ENCODE measurements at regions of chr17 and their contacts with region 1.

Region 1: GRCh38 chr17:49031965-49032928 is 35.1 kb downstream of the IGF2BP1 start:
- DNase-seq: peak; percentile 59
- H3K4me3 ChIP-seq: no peak overlapping the region
- H3K27ac ChIP-seq: no peak overlapping the region
- H3K4me1 ChIP-seq: peaks cover 11% of the 10 kb centered on the region
- H3K27me3 ChIP-seq: no peaks in the 10 kb centered on the region
- CTCF ChIP-seq: peak; percentile 87 to 90

Region 2: GRCh38 chr17:48678141-48678971 is 353.9 kb before region 1 on chr17:
- CTCF ChIA-PET with region 1: no interaction called
- dilution Hi-C with region 1: no loop called
- in situ Hi-C with region 1: no loop called
- intact Hi-C with region 1: loop called (anchors 1 kb)
- DNase-seq: peak; percentile 69
- H3K4me3 ChIP-seq: no peak overlapping the region
- H3K27ac ChIP-seq: no peak overlapping the region
- H3K4me1 ChIP-seq: peaks cover 10% of the 10 kb centered on the region
- H3K27me3 ChIP-seq: peaks cover 2% of the 10 kb centered on the region
- CTCF ChIP-seq: peak; percentile 78 to 96

Region 3: DNA sequence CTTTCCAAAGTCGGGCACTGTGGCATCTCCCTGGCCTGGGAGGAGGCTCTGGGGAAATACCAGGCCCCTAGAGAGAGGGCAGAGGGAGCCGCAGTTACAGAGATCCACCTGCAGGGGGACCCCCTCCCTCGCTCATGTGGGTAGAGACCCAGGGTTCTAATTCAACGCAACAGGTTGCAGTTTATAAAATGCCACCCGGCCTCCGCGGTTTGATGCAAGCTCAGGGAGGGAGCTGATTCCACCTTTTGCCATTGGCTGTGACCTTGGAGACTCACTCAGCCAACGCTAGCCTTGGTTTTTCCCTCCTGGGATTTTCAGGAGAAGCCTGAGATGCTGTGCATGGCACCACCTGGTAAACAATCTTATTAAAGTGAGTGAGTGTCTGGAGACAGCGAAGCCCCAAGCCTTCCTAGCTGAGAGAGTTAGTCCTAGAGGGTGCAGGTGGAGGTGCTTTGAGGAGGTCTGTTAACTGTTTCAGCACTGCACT is 227.3 kb before region 1 on chr17:
- CTCF ChIA-PET with region 1: no interaction called
- dilution Hi-C with region 1: loop called (anchors 5 kb)
- in situ Hi-C with region 1: loop called (anchors 10 kb)
- intact Hi-C with region 1: loop called (anchors 1 kb)
- DNase-seq: peak; percentile 21
- H3K4me3 ChIP-seq: no peak overlapping the region
- H3K27ac ChIP-seq: no peak overlapping the region
- H3K4me1 ChIP-seq: no peaks in the 10 kb centered on the region
- H3K27me3 ChIP-seq: no peaks in the 10 kb centered on the region
- CTCF ChIP-seq: peak; percentile 73 to 96

Region 4: DNA sequence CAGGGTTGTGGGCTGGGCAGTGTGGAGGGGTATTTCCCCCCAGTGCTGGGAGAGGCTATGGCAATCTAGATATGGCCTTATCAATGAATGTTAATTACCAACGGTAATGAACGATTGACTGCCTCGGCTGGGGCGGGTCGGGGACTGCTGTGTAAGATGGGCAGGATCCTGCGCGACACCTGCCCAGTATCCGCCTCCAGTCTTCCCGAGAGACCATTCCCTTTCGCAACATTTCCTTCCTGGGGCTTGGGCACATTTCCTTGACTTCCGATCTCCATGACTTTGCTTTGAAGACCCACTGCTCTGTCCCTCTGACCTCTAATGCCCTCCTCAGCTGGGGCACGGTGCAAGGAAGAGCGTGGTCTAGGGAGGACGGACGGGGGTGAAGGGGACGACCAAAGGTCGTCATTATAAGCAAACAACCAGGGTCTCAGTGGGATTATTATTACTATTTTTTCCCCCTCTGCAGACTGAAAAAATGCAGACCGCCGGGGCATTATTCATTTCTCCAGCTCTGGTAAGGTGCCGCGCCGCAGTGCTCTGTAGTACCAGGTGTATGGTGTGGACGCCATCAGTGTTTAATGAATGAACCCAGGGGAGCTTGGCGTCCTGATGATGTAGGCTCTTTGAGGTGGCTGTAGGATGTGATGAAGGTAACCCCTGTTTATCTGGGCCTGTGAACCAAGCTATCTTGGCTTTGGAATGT is 139.2 kb before region 1 on chr17:
- CTCF ChIA-PET with region 1: interaction called, 10 read pairs
- dilution Hi-C with region 1: no loop called
- in situ Hi-C with region 1: loop called (anchors 10 to 25 kb)
- intact Hi-C with region 1: loop called (anchors 1 kb)
- DNase-seq: no peak
- H3K4me3 ChIP-seq: peak overlapping the region; percentile 69 to 93 (median 85)
- H3K27ac ChIP-seq: peak overlapping the region; percentile 85
- H3K4me1 ChIP-seq: peaks cover 12% of the 10 kb centered on the region
- H3K27me3 ChIP-seq: no peaks in the 10 kb centered on the region
- CTCF ChIP-seq: no peak

Region 5: DNA sequence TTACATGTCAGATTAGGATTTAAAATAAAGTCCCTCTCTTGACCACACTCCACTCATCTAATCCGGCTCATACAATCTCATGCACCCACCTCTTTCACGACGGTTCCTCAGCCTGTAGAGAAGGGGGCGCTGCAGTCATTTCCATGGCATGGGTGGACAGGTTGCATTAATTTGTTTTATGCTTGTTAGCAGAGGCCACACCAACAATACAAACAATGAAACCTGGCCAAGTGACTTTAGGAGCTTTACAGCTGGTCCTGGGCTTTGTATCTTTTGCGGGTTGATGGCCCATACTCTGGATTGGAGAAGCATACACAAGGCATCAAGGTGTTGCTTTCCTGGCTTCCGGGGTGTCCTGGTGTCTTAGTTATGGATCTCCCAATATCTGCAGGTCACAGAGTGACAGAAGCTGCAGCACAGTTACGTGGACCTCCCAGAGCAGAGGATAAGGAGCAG is 77.9 kb before region 1 on chr17:
- CTCF ChIA-PET with region 1: interaction called, 6 read pairs
- dilution Hi-C with region 1: no loop called
- in situ Hi-C with region 1: loop called (anchors 5 to 10 kb)
- intact Hi-C with region 1: loop called (anchors 1 kb)
- DNase-seq: no peak
- H3K4me3 ChIP-seq: no peak overlapping the region
- H3K27ac ChIP-seq: no peak overlapping the region
- H3K4me1 ChIP-seq: no peaks in the 10 kb centered on the region
- H3K27me3 ChIP-seq: no peaks in the 10 kb centered on the region
- CTCF ChIP-seq: peak; percentile 42 to 61

Region 6: DNA sequence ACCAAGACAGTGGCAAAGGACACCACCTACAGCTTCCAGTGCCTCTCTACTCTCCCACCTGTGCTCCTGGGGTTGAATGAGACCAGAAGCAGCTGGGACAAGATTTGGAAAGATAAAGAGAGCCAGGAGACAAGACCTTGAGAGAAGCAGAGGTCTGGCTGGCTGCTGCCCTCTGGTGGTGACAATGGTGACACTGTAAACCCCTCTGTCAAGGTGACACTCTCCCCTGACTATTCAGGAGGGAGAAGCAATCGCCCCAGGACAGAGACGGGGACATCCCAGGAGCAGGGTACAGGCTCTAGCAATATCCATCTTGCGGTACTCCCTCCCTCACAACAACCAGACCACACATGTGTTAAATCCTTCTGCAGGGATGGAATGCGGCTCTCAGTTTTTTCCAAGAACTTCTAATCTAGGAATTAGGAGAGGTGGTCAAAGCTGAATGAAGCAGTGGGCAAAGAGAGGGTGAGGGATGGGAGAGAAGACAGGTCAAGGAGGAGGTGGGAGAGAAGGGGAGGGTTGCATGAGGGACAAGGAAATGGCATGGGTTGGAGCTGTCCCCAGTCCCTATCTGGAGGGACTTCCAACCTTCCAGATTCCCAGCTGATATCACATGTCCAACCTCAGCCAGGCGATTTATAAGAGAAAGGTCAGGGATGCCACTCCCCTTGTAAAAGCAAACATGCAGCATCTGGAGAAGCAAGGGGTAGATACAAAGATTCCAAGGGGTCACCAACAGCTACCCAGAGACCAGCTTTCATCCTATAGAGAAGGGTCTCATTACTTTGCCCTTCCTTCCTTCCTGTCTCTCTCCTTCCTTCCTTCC is 195.4 kb after region 1 on chr17:
- CTCF ChIA-PET with region 1: interaction called, 13 read pairs
- dilution Hi-C with region 1: no loop called
- in situ Hi-C with region 1: no loop called
- intact Hi-C with region 1: loop called (anchors 1 kb)
- DNase-seq: peak; percentile 48
- H3K4me3 ChIP-seq: no peak overlapping the region
- H3K27ac ChIP-seq: no peak overlapping the region
- H3K4me1 ChIP-seq: peaks cover 14% of the 10 kb centered on the region
- H3K27me3 ChIP-seq: peaks cover 17% of the 10 kb centered on the region
- CTCF ChIP-seq: peak; percentile 82 to 91

Measured in mammary epithelial cell (primary cell).